ENCODE measurements at regions of chr2 and their contacts with region 1.

Region 1: GRCh38 chr2:186589612-186590349 is at the start of gene ITGAV:
- DNase-seq: peak; percentile 77 to 88
- H3K4me3 ChIP-seq: peak within 1 kb of the TSS; percentile 62
- H3K27ac ChIP-seq: peak within 1 kb of the TSS; percentile 68
- H3K4me1 ChIP-seq: peaks cover 20% of the 10 kb centered on the region
- H3K27me3 ChIP-seq: no peaks in the 10 kb centered on the region
- CTCF ChIP-seq: no peak
- total RNA-seq, gene ITGAV: 25.0 and 28.0 TPM in 2 replicates

Region 2: DNA sequence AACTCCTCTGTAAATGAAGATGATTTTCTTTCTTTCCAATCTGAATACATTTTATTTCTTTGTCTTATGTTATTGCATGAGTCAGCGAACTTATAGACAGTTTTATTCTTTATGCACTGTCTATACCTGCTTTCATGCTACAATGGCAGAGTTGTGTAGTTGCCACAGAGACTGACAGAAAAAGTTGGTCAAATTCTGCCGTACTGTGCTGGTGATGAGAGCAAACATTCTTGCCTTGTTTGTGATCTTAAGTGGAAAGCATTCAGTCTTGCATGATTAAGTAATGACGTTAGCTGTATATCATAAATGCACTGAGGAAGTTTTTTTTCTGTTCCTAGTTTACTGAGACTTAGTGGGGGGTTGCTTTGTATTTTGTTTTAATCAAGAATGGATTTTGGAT is 70.8 kb before region 1 on chr2:
- CTCF ChIA-PET with region 1: no interaction called
- POLR2A ChIA-PET with region 1: no interaction called
- intact Hi-C with region 1: loop called (anchors 5 kb)
- DNase-seq: no peak
- H3K4me3 ChIP-seq: no peak overlapping the region
- H3K27ac ChIP-seq: no peak overlapping the region
- H3K4me1 ChIP-seq: no peaks in the 10 kb centered on the region
- H3K27me3 ChIP-seq: no peaks in the 10 kb centered on the region
- CTCF ChIP-seq: no peak

Region 3: GRCh38 chr2:186544255-186544675 is 45.5 kb before region 1 on chr2:
- CTCF ChIA-PET with region 1: no interaction called
- POLR2A ChIA-PET with region 1: no interaction called
- intact Hi-C with region 1: loop called (anchors 5 kb)
- DNase-seq: peak; percentile 17 to 83
- H3K4me3 ChIP-seq: peak overlapping the region; percentile 30; the same call in 1 of the 2 replicates
- H3K27ac ChIP-seq: peak overlapping the region; percentile 95
- H3K4me1 ChIP-seq: peaks cover 29% of the 10 kb centered on the region
- H3K27me3 ChIP-seq: no peaks in the 10 kb centered on the region
- CTCF ChIP-seq: no peak

Region 4: DNA sequence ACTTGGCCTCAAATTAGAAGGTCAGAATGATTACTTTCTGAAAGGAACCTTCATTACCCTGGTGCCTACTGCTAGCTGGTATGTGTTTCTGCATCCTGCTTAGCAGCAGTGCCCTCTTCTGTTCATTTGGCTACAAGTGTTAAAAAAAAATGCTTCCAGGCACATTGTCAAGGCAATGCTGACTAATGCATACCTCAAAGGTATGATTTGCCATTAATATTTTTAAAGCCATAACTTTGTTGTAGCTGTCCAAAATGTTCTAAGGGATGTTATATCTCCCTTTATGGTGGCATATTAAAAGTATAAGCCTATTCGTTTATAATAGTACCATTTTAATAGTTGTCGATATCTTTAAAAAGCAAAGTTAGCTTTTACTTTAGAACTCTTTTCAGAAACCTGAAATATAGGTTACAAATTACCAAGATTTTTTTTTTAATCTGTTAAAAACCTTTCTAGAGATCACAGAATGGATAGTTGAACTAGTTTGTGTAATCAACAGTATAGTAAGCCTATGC is 52.1 kb after region 1 on chr2:
- CTCF ChIA-PET with region 1: no interaction called
- POLR2A ChIA-PET with region 1: interaction called, 17 read pairs
- intact Hi-C with region 1: loop called (anchors 5 kb)
- DNase-seq: peak; percentile 38 to 66
- H3K4me3 ChIP-seq: no peak overlapping the region
- H3K27ac ChIP-seq: 0 out of 2 replicates have a peak overlapping the region, but pooled peaks have one; percentile 22
- H3K4me1 ChIP-seq: no peaks in the 10 kb centered on the region
- H3K27me3 ChIP-seq: no peaks in the 10 kb centered on the region
- CTCF ChIP-seq: peak; percentile 64

Region 5: DNA sequence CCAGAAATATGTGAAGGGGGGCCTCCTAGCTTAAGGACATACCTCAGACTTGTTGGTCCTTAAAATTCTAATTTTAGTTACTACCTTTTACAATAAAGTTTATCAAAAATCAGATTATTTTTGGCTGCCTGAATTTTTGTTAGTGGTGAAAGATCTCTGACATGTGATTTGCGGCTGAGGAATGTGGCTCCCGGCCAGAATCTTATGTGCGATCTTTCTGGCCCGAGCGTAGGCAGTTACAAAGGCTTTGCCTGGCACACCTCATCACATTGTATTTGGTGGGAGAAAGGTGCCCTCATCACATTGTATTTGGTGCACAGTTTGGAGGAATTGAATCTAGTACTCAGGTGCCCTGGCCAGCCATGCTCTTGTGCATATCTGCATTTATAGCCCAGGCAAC is 1990.9 kb after region 1 on chr2:
- CTCF ChIA-PET with region 1: no interaction called
- POLR2A ChIA-PET with region 1: no interaction called
- intact Hi-C with region 1: no loop called
- DNase-seq: no peak
- H3K4me3 ChIP-seq: no peak overlapping the region
- H3K27ac ChIP-seq: no peak overlapping the region
- H3K4me1 ChIP-seq: no peaks in the 10 kb centered on the region
- H3K27me3 ChIP-seq: no peaks in the 10 kb centered on the region
- CTCF ChIP-seq: no peak

Measured in PC-9 (cell line).